Spleen (tissue), 13 donors: ENCODE measurements at regions of chr14 and their contacts with region 1.

Region 1: GRCh38 chr14:80845856-80846255 is 95.7 kb downstream of the CEP128 start:
- DNase-seq: no peak
- H3K4me3 ChIP-seq: no peak overlapping the region
- H3K27ac ChIP-seq: no peak overlapping the region
- H3K4me1 ChIP-seq: no peaks in the 10 kb centered on the region
- H3K27me3 ChIP-seq: no peaks in the 10 kb centered on the region
- CTCF ChIP-seq: no peak
- POLR2A ChIP-seq: no peak

Region 2: DNA sequence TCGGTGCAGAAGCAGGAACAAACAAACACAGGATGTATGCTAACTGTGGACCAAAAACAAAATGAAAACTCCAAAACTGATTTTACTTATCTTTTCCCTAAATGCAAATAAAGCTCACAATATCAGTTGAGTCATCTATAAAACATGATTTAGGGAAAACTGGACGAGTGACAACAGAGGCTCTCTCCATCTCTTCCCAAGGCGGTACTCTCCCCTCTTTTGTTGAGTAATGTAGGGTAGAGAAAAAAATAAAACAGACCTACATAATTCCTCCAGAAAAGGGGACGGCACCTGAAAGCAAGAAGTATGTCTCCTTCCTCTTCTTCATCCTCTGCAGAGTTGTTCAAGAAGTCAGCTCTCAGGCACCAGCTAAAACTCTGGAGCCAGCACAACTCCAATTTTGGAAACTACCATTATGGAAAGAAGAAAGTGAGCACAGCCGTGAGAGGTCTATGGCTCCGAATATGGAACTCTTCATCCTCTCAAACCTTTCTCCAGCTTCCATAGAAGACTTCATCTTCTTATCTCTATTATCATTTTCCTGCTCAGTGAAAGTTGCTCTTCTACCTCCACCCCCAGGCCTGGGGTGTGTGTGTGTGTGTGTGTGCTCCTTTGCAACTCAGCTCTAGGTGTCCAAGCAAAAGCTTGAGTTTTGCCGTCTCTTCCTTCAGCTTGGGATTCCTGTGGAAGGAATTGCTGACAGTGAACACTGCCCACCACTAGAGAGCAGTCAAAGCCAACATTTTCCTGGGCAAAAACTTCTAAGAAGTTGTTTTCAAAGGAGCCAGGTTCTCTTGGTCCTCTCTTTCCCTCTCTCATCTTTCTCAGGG is 790.0 kb before region 1 on chr14:
- intact Hi-C with region 1: loop called (anchors 5 kb)
- DNase-seq: no peak
- H3K4me3 ChIP-seq: no peak overlapping the region
- H3K27ac ChIP-seq: no peak overlapping the region
- H3K4me1 ChIP-seq: no peaks in the 10 kb centered on the region
- H3K27me3 ChIP-seq: no peaks in the 10 kb centered on the region
- CTCF ChIP-seq: peak in 8 of 11 experiments; percentile 11 to 65 (median 46)
- POLR2A ChIP-seq: no peak